HEK293 (cell line): ENCODE measurements at regions of chr11 and their contacts with region 1.

Region 1: GRCh38 chr11:128172046-128172878 is 415.1 kb downstream of the ETS1 start:
- H3K4me3 ChIP-seq: no peak overlapping the region
- H3K27ac ChIP-seq: no peak overlapping the region
- H3K4me1 ChIP-seq: peaks cover 3% of the 10 kb centered on the region; the same call in 1 of the 2 replicates
- CTCF ChIP-seq: 0 out of 2 replicates have a peak, but pooled peaks have one; percentile 17

Region 2: DNA sequence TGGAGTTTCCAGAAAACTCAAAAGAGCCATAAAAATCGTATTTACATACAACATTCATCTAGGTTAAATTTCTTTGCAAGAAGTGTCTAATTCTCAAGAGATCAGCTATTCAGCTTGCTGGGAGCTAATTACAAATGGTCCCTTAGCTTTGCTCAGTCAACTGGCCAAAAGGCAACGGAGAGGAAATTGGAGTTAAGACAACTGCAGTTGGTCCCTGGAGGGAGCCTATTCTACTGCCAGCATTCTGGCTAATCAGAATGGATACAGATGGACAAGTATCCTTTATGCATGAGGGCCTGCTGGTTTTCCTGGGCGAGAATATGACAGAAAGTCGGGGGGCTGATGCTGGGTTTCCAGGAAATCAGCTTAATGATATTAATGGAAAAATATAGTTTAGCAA is 649.3 kb after region 1 on chr11:
- CTCF ChIA-PET with region 1: interaction called, 10 read pairs
- POLR2A ChIA-PET with region 1: no interaction called
- H3K4me3 ChIP-seq: no peak overlapping the region
- H3K27ac ChIP-seq: no peak overlapping the region
- H3K4me1 ChIP-seq: no peaks in the 10 kb centered on the region
- CTCF ChIP-seq: no peak